ENCODE measurements at regions of chr5 and their contacts with region 1.

Region 1: GRCh38 chr5:148120317-148120716 is 48.0 kb upstream of the SPINK14 start:
- DNase-seq: no peak
- H3K4me3 ChIP-seq: no peak overlapping the region
- H3K27ac ChIP-seq: no peak overlapping the region
- H3K4me1 ChIP-seq: no peaks in the 10 kb centered on the region
- H3K27me3 ChIP-seq: peaks cover 3% of the 10 kb centered on the region
- CTCF ChIP-seq: no peak
- POLR2A ChIP-seq: no peak

Region 2: DNA sequence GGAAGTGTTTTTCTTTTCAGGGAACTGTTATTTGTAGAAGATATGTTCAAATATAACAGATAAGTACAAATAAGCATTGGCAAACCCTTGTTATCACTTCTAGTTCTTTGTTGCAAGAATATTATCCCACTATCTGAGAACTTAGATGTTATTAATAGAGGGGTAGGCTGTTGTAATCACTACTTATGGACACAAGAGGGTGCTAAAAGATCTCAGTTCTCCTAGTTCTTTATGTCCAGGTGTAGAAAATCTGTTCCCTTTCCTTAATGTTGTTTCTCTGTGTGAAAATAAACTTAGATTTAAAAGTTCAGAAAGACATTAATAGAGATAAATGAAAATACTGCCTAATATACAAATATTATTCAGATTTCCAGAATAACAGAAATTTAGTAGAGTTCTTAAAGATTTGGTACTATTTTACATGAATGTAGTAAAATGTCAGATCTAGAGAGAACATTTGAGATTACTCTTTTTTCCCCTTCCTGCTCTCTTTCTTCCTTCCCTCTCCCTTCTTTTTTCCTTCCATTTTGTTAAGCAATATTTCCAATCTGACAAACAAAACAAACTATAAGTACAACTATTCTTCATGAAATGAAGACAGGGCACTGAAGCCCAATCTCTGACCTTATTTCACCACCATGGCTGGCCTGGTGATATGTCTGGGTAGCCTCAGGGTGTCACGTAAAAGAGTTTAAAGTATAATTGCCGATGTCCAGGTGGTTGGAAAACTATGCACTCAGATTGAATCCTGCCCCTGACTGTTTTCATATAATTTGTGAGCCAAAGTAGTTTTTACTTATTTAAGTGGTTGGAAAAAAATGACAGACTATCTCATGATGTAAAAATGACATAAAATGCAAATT is 170.4 kb before region 1 on chr5:
- intact Hi-C with region 1: loop called (anchors 5 kb)
- DNase-seq: no peak
- H3K4me3 ChIP-seq: no peak overlapping the region
- H3K27ac ChIP-seq: no peak overlapping the region
- H3K4me1 ChIP-seq: no peaks in the 10 kb centered on the region
- H3K27me3 ChIP-seq: peaks cover 7% of the 10 kb centered on the region
- CTCF ChIP-seq: peak; percentile 55 to 78 (median 74)
- POLR2A ChIP-seq: no peak

Measured in adrenal gland (tissue), 19 donors.